Activated naive CD4-positive, alpha-beta T cell treated with anti-CD3 and anti-CD28 coated beads for 36 hours (primary cell): ENCODE measurements at regions of chr16 and their contacts with region 1.

Region 1: DNA sequence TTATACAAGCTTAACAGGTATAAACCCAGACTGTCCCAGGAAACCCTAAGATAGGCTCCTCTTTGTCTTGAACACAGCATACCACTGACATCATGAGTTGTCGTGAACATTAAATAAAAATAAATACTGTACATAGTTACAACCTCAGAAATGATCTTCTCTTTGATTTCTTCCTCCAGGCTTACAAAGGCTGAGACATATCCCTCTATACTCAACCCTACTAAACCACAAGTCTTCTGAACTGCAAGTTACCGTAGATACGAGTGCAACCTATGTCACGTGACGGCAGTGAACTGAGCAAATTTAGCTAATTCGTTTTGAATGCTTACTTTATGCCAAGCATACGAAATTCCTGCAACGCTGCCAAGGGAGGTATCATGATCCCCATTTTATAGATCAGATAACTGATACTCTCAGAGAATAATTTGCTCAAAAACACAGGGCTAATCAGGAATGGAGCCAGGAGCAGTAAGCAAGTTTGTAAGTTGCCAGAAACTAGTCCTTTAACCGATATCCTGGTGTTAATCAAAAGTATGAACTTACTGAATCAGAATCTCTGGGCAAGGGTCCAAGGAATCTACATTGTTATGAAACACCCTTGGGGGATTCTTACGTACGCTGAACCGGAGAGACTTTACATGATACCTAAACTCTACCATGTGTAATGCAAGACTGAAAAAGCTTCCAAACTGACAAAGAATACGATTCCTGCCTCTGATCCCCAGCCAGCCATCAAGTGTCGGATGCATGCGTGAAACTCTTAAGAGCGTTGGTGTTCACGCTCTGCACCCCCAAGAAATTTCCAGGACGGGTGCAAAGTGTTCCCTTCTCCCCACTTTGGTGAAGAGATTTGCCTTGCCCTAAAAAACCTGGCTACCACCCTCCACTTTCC is 106.2 kb downstream of the XYLT1 start:
- DNase-seq: peak; percentile 78
- H3K4me3 Mint-ChIP-seq: peak overlapping the region; percentile 55
- H3K27ac Mint-ChIP-seq: peak overlapping the region; percentile 78
- H3K4me1 Mint-ChIP-seq: peaks cover 92% of the 10 kb centered on the region
- H3K27me3 Mint-ChIP-seq: no peaks in the 10 kb centered on the region

Region 2: GRCh38 chr16:17343028-17343427 is 21.5 kb before region 1 on chr16:
- CTCF ChIA-PET with region 1: interaction called, 7 read pairs
- intact Hi-C with region 1: loop called (anchors 2 kb)
- DNase-seq: peak; percentile 58
- H3K4me3 Mint-ChIP-seq: no peak overlapping the region
- H3K27ac Mint-ChIP-seq: no peak overlapping the region
- H3K4me1 Mint-ChIP-seq: peaks cover 70% of the 10 kb centered on the region
- H3K27me3 Mint-ChIP-seq: no peaks in the 10 kb centered on the region